ENCODE measurements at regions of chr1 and their contacts with region 1.

Region 1: GRCh38 chr1:21368515-21369289 is 71.2 kb upstream of the NBPF3 start:
- DNase-seq: peak; percentile 84
- H3K4me3 ChIP-seq: peak overlapping the region in 1 of 2 experiments; percentile 51; a peak in 1 of 4 replicates
- H3K27ac ChIP-seq: no peak overlapping the region
- H3K4me1 ChIP-seq: no peaks in the 10 kb centered on the region; a peak in 1 of 4 replicates
- H3K27me3 ChIP-seq: no peaks in the 10 kb centered on the region
- CTCF ChIP-seq: peak; percentile 99
- EP300 ChIP-seq: no peak
- RAD21 ChIP-seq: peak; percentile 100

Region 2: GRCh38 chr1:21244986-21245687 is 123.6 kb before region 1 on chr1:
- CTCF ChIA-PET with region 1: interaction called, 134 read pairs
- POLR2A ChIA-PET with region 1: no interaction called
- DNase-seq: peak; percentile 43
- H3K4me3 ChIP-seq: no peak overlapping the region
- H3K27ac ChIP-seq: no peak overlapping the region
- H3K4me1 ChIP-seq: no peaks in the 10 kb centered on the region
- H3K27me3 ChIP-seq: no peaks in the 10 kb centered on the region
- CTCF ChIP-seq: peak; percentile 57
- EP300 ChIP-seq: no peak
- RAD21 ChIP-seq: no peak

Region 3: DNA sequence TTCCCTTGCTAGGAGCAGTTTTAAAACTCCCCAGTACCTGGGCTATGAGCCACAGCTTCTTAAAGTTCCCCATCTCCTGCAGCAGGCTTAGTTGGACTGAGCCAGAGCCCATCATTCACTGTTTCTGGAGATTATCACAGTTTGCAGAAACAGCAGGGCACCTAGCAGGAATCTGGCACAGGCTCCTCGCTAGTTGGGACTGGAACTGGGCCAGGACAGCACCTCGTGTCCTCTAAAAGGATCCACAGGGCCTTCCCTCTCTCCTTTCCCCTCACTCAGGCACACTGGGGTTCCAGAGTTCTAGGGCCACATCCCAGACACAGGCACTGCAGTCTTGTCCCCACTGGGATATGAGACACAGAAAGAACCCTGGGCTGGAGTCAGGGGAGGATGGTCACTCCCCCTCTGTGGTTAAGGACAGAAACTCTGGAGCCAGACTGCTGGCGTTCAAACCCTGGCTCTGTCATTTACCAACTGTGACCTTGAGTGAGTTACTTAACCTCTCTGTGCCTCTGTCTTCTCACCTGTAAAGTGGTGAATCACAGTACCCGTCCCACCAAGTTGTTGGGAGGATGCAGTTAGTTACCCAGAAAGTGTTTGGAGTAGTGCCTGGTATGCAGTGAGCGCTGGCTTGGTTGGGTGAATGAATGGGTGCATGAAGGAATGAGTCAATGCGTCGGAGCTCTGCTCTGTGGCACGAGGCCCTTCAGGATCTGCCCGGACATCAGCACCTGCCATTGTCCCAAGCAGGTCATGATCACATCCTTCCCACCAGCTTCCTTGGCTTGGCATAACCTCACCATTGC is 59.7 kb before region 1 on chr1:
- CTCF ChIA-PET with region 1: interaction called, 10 read pairs
- POLR2A ChIA-PET with region 1: no interaction called
- DNase-seq: peak; percentile 60
- H3K4me3 ChIP-seq: no peak overlapping the region
- H3K27ac ChIP-seq: peak overlapping the region; percentile 24 to 99; a peak in 3 of 4 replicates
- H3K4me1 ChIP-seq: peaks cover 49 to 83% of the 10 kb centered on the region in 2 experiments
- H3K27me3 ChIP-seq: no peaks in the 10 kb centered on the region
- CTCF ChIP-seq: no peak
- EP300 ChIP-seq: peak in 1 of 2 experiments; percentile 84; a peak in 2 of 4 replicates
- RAD21 ChIP-seq: 0 out of 2 replicates have a peak, but pooled peaks have one; percentile 6

Region 4: DNA sequence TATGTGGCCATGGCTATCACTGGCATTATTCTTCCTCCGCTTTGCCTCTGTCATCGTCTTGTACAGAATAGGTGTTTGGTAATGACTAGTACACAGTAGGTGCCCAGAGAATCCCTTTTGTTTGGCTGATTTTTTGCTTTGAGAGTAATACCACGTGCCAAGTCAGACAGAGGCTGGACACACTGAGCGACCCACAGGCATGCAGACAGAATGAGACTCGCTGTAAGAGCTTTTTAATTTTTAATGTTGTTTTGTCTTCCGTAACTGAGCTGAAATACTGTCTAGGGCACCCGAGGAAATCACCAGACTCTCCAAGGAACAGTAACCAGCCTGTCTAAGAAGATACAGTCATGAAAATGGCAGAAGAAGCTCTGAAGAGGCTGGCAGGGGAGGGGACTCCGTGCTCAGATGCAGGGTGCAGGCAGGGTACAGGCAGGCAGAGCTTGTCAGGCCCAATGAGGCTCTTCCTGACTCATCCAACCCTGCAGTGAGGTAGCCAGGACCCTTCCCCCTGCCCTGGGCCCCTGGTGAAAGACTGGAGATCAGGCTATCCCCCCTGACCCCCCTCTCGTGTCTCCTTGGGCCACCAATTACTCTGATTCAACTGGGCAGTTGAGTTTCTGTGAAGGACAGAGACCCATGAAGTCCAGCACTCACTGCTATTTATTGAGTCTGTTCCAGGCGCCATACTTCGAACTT is 18.4 kb before region 1 on chr1:
- CTCF ChIA-PET with region 1: interaction called, 33 read pairs
- POLR2A ChIA-PET with region 1: no interaction called
- DNase-seq: peak; percentile 4
- H3K4me3 ChIP-seq: no peak overlapping the region
- H3K27ac ChIP-seq: no peak overlapping the region
- H3K4me1 ChIP-seq: peaks cover 0 to 5% of the 10 kb centered on the region in 2 experiments; a peak in 1 of 4 replicates
- H3K27me3 ChIP-seq: no peaks in the 10 kb centered on the region; the same call in 1 of the 2 replicates
- CTCF ChIP-seq: no peak
- EP300 ChIP-seq: no peak
- RAD21 ChIP-seq: no peak

Region 5: DNA sequence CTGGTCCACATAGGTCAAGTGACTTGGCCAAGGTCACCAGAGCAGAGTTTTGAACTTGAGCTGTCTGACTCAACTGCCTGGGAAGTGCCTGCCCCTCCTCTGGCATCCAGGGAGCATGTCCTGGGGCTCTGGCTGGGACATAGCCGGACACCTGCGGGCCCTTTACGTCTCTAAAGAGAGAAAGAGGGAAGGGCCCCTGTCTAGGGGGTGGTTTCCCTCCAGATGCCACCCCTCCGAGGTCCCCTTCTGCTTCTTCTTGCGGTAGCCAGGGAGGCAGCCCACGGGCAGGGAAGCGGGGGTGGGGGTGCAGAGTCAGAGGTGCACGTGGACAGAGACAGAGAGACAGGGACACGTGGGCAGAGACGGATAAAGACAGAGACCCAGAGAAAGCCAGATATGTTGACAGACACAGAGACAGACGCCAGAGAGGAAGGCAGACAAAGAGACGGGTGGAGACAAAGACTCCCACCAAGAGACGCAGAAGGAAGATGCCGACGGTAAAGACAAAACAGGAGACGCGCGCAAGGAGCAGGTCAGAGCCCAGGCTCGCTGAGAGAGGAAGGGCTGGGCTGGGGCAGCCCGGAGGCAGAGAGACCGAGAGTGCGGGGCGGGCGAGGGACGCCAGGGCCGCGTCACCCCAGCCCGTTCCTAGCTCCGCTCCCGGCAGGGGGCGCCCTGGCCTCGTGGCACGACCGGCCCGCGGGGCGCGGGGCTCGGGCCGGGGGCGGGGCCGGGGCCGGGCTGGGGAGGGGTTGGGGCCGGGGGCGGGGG is 140.1 kb after region 1 on chr1:
- CTCF ChIA-PET with region 1: interaction called, 11 read pairs
- POLR2A ChIA-PET with region 1: no interaction called
- DNase-seq: peak; percentile 97
- H3K4me3 ChIP-seq: no peak overlapping the region
- H3K27ac ChIP-seq: no peak overlapping the region
- H3K4me1 ChIP-seq: peaks cover 7 to 9% of the 10 kb centered on the region in 2 experiments; a peak in 2 of 4 replicates
- H3K27me3 ChIP-seq: no peaks in the 10 kb centered on the region; the same call in 1 of the 2 replicates
- CTCF ChIP-seq: peak; percentile 55
- EP300 ChIP-seq: no peak
- RAD21 ChIP-seq: peak; percentile 58

Region 6: GRCh38 chr1:21659099-21659923 is 290.6 kb after region 1 on chr1:
- CTCF ChIA-PET with region 1: interaction called, 70 read pairs
- POLR2A ChIA-PET with region 1: no interaction called
- DNase-seq: peak; percentile 96
- H3K4me3 ChIP-seq: peak overlapping the region; percentile 30 to 52
- H3K27ac ChIP-seq: no peak overlapping the region
- H3K4me1 ChIP-seq: peaks cover 0 to 10% of the 10 kb centered on the region in 2 experiments; a peak in 1 of 4 replicates
- H3K27me3 ChIP-seq: peaks cover 7% of the 10 kb centered on the region
- CTCF ChIP-seq: peak; percentile 94
- EP300 ChIP-seq: no peak
- RAD21 ChIP-seq: peak; percentile 85

Measured in SK-N-SH (cell line).